PC-3 (cell line): ENCODE measurements at regions of chr17 and their contacts with region 1.

Region 1: GRCh38 chr17:48873209-48873608 is 19.4 kb upstream of the ATP5MC1 start:
- DNase-seq: no peak
- ATAC-seq: peak; percentile 35
- H3K4me3 ChIP-seq: no peak overlapping the region
- H3K27ac ChIP-seq: no peak overlapping the region
- H3K4me1 ChIP-seq: peaks cover 4% of the 10 kb centered on the region; the same call in 1 of the 2 replicates
- H3K27me3 ChIP-seq: no peaks in the 10 kb centered on the region
- CTCF ChIP-seq: no peak

Region 2: DNA sequence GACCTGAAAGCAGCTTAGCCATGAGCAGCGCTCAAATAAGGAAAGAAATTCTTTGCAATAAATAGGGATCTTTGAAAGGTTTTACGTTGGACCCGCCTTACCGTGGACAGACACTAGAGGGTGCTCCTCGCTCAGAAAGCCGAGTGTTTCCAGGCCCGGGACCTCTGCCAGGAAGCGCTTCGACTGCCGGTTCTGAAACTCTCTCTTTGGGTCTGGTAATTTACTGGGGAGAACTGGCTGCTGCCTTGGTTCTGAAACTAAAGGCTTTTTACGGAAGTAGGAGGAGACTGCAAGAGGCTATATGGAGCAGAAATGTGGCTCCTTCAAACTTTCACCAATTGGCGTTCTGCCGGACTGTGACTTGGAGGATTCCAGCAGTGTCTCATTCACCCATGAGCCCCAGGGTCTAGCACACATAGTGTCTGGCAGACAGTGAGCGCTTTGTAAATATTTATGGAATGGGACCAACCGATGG is 201.5 kb before region 1 on chr17:
- CTCF ChIA-PET with region 1: interaction called, 13 read pairs
- POLR2A ChIA-PET with region 1: interaction called, 6 read pairs
- intact Hi-C with region 1: no loop called
- DNase-seq: peak; percentile 95
- ATAC-seq: peak; percentile 72
- H3K4me3 ChIP-seq: peak overlapping the region; percentile 64
- H3K27ac ChIP-seq: no peak overlapping the region
- H3K4me1 ChIP-seq: peaks cover 5% of the 10 kb centered on the region; the same call in 1 of the 2 replicates
- H3K27me3 ChIP-seq: no peaks in the 10 kb centered on the region
- CTCF ChIP-seq: peak; percentile 96

Region 3: DNA sequence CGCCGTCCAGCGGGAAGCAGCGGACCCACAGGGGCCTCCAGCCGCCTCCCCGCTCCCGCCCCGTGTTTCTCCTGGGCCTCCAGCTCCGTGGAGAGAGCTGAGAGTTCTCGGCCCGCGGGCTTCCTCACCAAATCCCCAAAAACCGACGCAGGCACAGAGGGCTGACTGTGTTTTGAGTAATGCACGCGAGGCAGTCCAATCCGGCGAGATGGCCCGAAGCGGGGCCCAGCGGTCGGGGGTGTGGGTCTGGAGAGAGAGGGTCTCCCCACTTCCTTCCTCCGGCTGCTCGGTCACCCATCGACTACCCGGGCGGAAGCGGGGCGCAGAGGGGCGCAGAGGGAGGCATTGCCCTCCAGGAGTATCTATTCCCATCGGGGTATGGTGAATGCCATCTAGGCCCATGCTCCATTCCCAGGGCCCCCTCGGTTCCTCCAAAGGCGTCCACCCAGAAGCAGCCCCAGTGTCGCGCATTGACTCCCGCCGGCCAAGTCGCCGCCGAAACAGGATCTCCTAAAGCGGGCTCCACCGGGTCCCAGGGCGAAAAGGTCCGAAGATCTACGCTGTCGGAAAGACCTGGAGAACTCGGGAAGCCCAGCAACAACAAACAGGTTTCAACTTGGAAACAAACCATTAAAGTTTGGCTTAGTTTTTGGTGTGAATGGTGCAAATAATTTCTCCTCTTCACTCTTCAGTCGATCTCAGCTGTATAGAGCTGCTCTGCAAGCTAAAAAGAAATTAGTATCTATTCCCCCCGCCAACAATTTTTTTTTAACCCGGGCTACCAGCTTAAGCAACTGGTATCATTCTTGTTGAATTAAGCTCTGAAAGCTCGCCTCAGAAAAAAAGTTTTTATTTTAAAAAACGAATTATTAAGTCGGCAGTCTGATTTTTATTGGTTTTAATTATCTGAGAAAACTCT is 125.5 kb before region 1 on chr17:
- CTCF ChIA-PET with region 1: no interaction called
- POLR2A ChIA-PET with region 1: no interaction called
- intact Hi-C with region 1: no loop called
- DNase-seq: peak; percentile 71
- ATAC-seq: peak; percentile 27
- H3K4me3 ChIP-seq: peak overlapping the region; percentile 78
- H3K27ac ChIP-seq: peak overlapping the region; percentile 74
- H3K4me1 ChIP-seq: peaks cover 50% of the 10 kb centered on the region
- H3K27me3 ChIP-seq: no peaks in the 10 kb centered on the region
- CTCF ChIP-seq: no peak

Region 4: GRCh38 chr17:48804925-48805411 is 68.2 kb before region 1 on chr17:
- CTCF ChIA-PET with region 1: interaction called, 63 read pairs
- POLR2A ChIA-PET with region 1: no interaction called
- intact Hi-C with region 1: no loop called
- DNase-seq: peak; percentile 88
- ATAC-seq: peak; percentile 98
- H3K4me3 ChIP-seq: peak overlapping the region; percentile 22; the same call in 1 of the 2 replicates
- H3K27ac ChIP-seq: no peak overlapping the region
- H3K4me1 ChIP-seq: peaks cover 3% of the 10 kb centered on the region; the same call in 1 of the 2 replicates
- H3K27me3 ChIP-seq: no peaks in the 10 kb centered on the region
- CTCF ChIP-seq: peak; percentile 99

Region 5: DNA sequence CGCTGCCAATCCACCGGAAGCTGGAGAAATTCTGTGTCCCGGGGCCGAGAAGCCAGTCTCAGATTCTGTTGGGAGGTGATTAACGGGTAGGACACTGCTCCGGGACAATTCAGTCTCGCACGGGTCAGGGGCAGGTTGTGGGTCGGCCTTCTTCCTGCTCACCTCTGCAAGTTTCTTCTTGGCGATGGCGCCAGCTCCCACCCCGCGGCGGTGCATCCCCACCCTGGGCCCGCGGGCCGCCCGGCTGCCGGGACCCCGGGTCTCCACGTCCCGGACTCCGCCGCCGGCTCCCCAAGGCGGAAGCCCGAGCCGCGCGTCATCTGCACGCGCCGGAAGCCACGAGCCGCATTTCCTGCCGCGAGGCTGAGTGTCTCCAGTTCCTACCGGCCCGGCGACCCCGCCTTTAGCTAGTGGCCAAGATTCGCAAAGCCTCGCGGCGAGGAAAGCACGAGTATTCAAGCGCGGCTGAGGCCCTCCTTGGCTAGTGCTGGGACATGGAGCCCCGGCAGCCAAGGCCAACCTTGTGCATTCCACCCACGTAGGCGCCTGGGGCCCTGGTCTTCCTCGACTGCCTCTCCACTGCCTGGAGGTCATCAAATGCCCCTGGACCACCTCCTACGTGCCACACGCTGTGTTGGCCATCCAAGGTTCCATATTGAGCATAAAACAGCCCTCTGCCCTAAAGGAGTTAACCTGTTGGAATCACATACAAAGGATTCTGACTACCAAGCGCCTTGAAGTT is 71.5 kb after region 1 on chr17 and contains the start of gene SNF8:
- CTCF ChIA-PET with region 1: no interaction called
- POLR2A ChIA-PET with region 1: no interaction called
- intact Hi-C with region 1: no loop called
- DNase-seq: peak; percentile 97
- ATAC-seq: peak; percentile 95
- H3K4me3 ChIP-seq: peak within 1 kb of the TSS; percentile 80
- H3K27ac ChIP-seq: peak within 1 kb of the TSS; percentile 50
- H3K4me1 ChIP-seq: peaks cover 13% of the 10 kb centered on the region
- H3K27me3 ChIP-seq: no peaks in the 10 kb centered on the region
- CTCF ChIP-seq: no peak
- total RNA-seq, gene SNF8: 278 TPM in 2 replicates